ENCODE measurements at regions of chr11 and their contacts with region 1.

Region 1: DNA sequence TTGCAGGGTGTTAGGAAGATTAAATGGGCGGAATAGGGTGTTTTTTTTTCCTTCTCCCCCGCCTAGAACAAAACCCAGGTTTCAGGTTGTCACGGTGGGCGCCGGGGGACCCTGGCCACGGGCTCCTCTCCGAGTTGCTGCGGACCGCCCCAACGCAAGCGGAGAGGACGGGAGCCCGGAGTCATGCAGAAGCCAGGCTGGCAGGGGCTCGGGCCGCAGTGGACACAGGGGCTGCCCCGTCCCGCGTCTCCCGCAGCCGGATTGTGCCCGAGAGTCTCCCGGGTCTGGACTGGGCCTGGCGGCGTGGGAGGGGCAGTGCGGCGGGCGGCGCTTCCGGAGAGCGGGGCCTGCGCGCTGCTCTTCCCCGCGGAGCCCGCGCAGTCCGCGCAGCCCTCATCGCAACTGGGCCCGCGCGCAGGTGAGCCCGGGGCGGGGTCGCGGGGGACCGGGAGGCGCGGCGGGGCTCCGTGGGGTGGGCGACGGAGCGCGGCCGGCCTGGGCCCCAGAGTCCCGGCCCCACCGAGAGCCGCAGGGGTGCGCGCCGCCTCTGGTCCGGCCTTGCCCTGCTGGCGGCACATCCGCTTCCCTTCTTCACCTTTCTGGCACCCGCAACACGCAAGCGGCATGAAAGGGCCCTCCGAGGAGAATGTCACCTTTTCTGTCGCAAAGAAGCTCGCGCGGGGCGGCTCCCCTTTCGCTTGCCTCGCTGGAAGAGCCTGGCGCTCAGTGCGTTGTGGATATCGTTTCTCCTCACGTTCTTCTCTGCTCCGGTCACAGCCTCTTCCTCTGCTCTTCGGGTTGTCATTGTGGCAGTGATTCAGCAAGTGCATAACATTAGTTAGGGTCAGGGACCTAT is at the start of gene TIRAP:
- DNase-seq: peak; percentile 90
- H3K4me3 Mint-ChIP-seq: peak within 1 kb of the TSS; percentile 98
- H3K27ac Mint-ChIP-seq: peak within 1 kb of the TSS; percentile 94
- H3K4me1 Mint-ChIP-seq: peaks cover 31% of the 10 kb centered on the region
- H3K27me3 Mint-ChIP-seq: no peaks in the 10 kb centered on the region
- total RNA-seq, gene TIRAP: 11.4 and 12.0 TPM in 2 replicates

Region 2: GRCh38 chr11:126303623-126304456 is 20.9 kb after region 1 on chr11 and contains the start of gene DCPS:
- intact Hi-C with region 1: loop called (anchors 1 kb)
- DNase-seq: peak; percentile 97
- H3K4me3 Mint-ChIP-seq: peak within 1 kb of the TSS; percentile 91
- H3K27ac Mint-ChIP-seq: peak within 1 kb of the TSS; percentile 97
- H3K4me1 Mint-ChIP-seq: peaks cover 19% of the 10 kb centered on the region
- H3K27me3 Mint-ChIP-seq: no peaks in the 10 kb centered on the region
- total RNA-seq, gene DCPS: 36.0 and 40.2 TPM in 2 replicates